Tibial artery (tissue), 4 donors: ENCODE measurements at regions of chr2 and their contacts with region 1.

Region 1: GRCh38 chr2:191515551-191515950 is 162.4 kb upstream of the NABP1 start:
- DNase-seq: no peak
- H3K4me3 ChIP-seq: no peak overlapping the region
- H3K27ac ChIP-seq: no peak overlapping the region
- H3K4me1 ChIP-seq: no peaks in the 10 kb centered on the region
- H3K27me3 ChIP-seq: no peaks in the 10 kb centered on the region
- CTCF ChIP-seq: no peak

Region 2: DNA sequence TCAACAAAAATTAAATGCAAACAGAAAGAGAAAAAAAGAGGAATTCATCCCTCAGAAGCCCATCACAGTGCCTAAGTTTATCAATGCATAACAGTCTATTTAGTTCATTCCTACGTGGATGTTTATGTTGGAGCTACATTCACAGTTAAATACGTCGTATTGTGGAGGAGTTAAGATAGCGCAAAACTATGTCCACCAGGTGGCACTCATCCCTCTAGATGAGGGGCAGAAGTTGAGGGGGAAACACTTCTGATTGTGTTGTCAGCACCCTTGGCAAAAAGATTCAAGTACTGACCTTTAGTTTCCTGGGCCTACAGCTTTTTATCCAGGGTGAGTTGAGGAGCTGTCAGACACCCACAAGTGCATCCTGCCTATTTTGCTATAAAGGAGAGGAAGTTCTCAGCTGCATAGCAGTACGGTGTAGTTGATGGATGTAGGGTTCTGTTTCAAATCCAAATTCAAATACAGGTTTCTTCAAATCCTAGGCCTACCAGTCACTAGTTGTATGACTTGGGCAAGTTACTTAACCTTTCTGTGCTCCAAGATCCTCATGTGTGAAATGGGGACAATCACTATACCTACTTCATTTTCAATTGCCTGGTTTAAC is 297.2 kb before region 1 on chr2:
- intact Hi-C with region 1: loop called (anchors 5 kb)
- DNase-seq: no peak
- H3K4me3 ChIP-seq: no peak overlapping the region
- H3K27ac ChIP-seq: no peak overlapping the region
- H3K4me1 ChIP-seq: peaks cover 0 to 14% (median 6%) of the 10 kb centered on the region in 4 donors
- H3K27me3 ChIP-seq: no peaks in the 10 kb centered on the region
- CTCF ChIP-seq: peak; percentile 51 to 62